ENCODE measurements at regions of chr6 and their contacts with region 1.

Region 1: DNA sequence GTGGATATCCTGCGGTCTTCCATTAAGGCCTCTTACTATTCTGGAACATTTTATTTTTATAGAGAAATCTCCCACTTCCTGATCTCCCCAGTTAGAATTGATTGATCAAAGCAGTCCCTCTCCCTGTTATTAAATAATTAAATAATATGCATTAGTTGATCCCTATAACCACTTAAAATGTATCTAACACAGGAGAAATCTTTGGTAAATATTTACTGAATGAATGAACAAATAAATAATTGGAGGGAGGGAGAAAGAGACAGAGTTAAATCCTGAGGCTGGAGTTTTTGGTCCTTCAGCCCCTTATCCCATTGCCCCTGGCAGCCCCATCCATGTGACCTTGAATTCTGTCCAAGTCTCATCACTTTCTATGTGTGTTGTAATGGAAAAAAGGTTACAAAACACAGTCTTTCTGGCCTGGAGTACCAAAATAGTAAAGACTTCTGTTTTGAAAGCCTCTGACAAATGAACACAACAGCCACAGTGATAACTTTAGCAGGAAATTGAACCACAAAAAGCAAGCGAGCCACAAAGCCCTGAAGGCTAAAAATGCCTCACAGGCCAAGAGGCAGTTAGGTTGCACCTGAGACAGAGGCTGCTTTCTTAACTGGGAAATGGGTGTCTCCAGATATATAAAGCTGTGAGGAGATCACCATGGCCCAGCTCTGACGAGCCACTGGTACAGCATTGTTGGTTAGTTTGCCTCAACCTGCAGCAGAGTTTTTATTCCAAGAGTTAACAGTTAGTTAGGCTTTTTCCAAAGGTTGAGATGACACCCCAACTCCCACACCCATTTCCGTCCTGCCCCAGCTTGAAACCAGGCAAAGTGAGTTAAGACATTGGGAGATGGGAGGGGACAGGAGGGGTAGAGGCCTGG is 11.3 kb downstream of the NT5E start:
- DNase-seq: peak in 2 of 3 donors; percentile 74 to 79
- H3K4me3 ChIP-seq: peak overlapping the region in 1 of 7 experiments; percentile 27
- H3K27ac ChIP-seq: peak overlapping the region in 1 of 2 experiments; percentile 1
- H3K4me1 ChIP-seq: peaks cover 12 to 44% (median 35%) of the 10 kb centered on the region in 4 experiments
- H3K27me3 ChIP-seq: peaks cover 0 to 18% (median 9%) of the 10 kb centered on the region in 5 experiments

Region 2: DNA sequence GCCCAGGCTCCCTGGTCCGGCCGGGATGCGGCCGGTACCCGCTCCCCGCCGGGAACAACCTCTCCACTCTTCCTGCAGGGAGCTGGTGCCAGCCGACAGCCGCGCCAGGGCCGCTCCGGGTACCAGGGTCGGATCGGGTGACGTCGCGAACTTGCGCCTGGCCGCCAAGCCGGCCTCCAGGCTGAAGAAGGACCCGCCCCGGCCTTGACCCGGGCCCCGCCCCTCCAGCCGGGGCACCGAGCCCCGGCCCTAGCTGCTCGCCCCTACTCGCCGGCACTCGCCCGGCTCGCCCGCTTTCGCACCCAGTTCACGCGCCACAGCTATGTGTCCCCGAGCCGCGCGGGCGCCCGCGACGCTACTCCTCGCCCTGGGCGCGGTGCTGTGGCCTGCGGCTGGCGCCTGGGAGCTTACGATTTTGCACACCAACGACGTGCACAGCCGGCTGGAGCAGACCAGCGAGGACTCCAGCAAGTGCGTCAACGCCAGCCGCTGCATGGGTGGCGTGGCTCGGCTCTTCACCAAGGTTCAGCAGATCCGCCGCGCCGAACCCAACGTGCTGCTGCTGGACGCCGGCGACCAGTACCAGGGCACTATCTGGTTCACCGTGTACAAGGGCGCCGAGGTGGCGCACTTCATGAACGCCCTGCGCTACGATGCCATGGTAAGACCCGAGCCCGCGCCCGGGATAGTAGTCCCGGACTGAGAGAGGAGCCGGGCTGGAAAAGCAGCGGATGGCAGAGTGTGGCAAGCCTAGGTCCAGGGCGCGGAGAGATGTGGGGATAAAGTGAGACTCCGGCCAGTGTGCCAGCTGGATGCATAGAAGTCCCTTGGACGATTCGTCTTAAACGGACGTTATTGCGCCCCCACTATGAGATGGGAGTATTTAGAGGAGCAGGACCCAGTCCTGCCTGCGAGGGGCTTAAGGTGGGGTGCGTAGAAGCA is 11.1 kb before region 1 on chr6 and contains the start of gene NT5E:
- CTCF ChIA-PET with region 1: interaction called, 14 read pairs
- POLR2A ChIA-PET with region 1: no interaction called
- DNase-seq: peak in 2 of 3 donors; percentile 64 to 74
- H3K4me3 ChIP-seq: peak within 1 kb of the TSS; percentile 23 to 70 (median 61)
- H3K27ac ChIP-seq: no peak within 1 kb of the TSS
- H3K4me1 ChIP-seq: peaks cover 4 to 16% (median 14%) of the 10 kb centered on the region in 4 experiments
- H3K27me3 ChIP-seq: peaks cover 10 to 92% (median 60%) of the 10 kb centered on the region in 5 experiments